ENCODE measurements at regions of chr14 and their contacts with region 1.

Region 1: DNA sequence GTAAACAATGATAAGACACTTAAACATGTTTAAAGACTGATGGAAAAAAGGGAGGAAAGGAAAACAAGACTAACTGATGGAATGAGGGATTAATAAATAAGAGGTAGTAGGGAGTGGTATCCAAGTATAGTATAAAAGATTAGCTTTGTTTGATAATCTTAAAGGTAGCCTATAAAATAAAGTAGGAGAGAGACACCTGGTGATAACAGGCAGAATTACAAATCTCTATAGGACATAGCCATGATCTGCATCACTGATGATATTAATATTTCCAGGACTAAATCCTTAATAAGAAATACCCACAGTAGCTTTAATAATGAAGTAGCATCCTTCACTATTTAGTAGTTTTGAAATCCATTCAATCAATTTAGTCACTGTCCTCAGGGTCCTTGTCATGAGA is 30.4 kb downstream of the DLGAP5 start:
- DNase-seq: no peak

Region 2: GRCh38 chr14:55094321-55095157 is 66.5 kb before region 1 on chr14:
- intact Hi-C with region 1: loop called (anchors 5 kb)
- DNase-seq: no peak